ENCODE measurements at regions of chr2 and their contacts with region 1.

Region 1: GRCh38 chr2:156118753-156119416 is 213.6 kb downstream of the NR4A2 start:
- DNase-seq: no peak
- ATAC-seq: no peak
- H3K4me3 ChIP-seq: no peak overlapping the region
- H3K27ac ChIP-seq: no peak overlapping the region
- H3K4me1 ChIP-seq: no peaks in the 10 kb centered on the region
- H3K27me3 ChIP-seq: no peaks in the 10 kb centered on the region

Region 2: GRCh38 chr2:156099382-156099781 is 19.5 kb before region 1 on chr2:
- intact Hi-C with region 1: loop called in 1 of 2 experiments (anchors 2 kb)
- DNase-seq: no peak
- ATAC-seq: no peak
- H3K4me3 ChIP-seq: no peak overlapping the region
- H3K27ac ChIP-seq: no peak overlapping the region
- H3K4me1 ChIP-seq: no peaks in the 10 kb centered on the region
- H3K27me3 ChIP-seq: no peaks in the 10 kb centered on the region

Measured in aorta (tissue), 5 donors.